BJ (cell line): ENCODE measurements at regions of chr9 and their contacts with region 1.

Region 1: DNA sequence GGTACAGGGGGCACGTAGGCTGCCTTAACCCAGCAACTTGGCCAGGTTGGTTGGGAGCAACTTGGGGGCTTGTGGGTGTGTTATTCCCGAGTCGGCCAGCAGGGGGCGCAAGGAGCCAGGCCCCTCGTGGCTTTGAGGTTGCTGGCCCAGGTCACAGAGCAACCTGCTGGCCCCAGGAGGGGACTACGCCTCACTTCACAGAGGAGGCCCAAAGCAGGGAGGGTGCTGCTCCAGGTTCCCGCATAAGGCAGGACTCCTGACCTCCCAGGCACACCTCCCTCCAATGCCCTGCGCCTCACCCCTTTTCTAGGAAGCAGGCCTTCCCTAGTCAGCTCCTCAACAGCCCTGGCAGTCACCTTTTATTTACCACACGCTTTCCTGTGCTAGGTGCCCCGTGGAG is 18.1 kb downstream of the KYAT1 start:
- DNase-seq: no peak
- H3K4me3 ChIP-seq: no peak overlapping the region
- H3K27me3 ChIP-seq: no peaks in the 10 kb centered on the region
- CTCF ChIP-seq: peak; percentile 95

Region 2: DNA sequence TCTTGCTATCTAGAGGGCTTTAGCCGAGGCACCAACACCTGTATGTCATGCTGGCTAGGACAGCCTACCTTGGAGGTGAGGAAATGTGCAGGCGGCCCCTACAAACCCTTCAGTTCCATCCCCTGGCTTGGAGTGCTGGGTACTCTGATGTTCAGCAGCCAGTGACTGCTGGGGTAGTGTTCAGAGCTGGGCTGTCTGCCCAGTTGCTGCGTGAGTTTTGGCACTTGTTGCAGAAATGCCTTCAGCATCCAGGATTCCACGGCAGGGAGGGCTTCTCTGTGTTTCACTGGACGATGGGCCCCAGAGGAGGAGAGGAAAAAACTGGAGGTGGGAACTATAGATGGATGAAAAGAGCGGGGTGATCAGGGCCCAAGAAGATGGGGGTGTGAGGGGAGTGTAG is 577.2 kb before region 1 on chr9:
- CTCF ChIA-PET with region 1: no interaction called
- POLR2A ChIA-PET with region 1: no interaction called
- DNase-seq: no peak
- H3K4me3 ChIP-seq: no peak overlapping the region
- H3K27me3 ChIP-seq: no peaks in the 10 kb centered on the region
- CTCF ChIP-seq: no peak

Region 3: GRCh38 chr9:128771745-128772519 is 91.7 kb before region 1 on chr9 and contains the start of gene ZER1:
- CTCF ChIA-PET with region 1: no interaction called
- POLR2A ChIA-PET with region 1: no interaction called
- DNase-seq: peak; percentile 20
- H3K4me3 ChIP-seq: peak within 1 kb of the TSS; percentile 69
- H3K27me3 ChIP-seq: no peaks in the 10 kb centered on the region
- CTCF ChIP-seq: no peak
- polyA plus RNA-seq, gene ZER1: 41.4 and 64.5 TPM in 2 replicates

Region 4: DNA sequence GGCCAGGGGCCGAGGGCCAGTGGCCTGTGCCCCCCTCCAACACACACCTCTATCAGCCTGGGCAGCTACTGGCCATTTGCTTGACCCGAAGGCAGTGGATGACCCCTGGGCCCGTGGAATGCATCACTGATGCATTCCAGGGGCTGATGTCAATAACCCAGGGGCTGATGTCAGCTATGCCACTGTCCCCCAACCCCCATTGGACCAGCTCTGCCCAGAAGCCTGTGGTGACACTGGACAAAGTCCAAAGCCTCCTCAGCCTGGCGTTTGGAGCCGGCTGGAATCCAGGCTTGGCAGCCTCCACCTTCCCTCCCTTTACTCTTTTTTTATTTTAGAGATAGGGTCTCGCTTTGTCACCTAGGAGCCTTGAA is 12.1 kb after region 1 on chr9:
- CTCF ChIA-PET with region 1: interaction called, 44 read pairs
- POLR2A ChIA-PET with region 1: no interaction called
- DNase-seq: no peak
- H3K4me3 ChIP-seq: no peak overlapping the region
- H3K27me3 ChIP-seq: no peaks in the 10 kb centered on the region
- CTCF ChIP-seq: no peak

Region 5: GRCh38 chr9:129052592-129052991 is 188.9 kb after region 1 on chr9:
- CTCF ChIA-PET with region 1: no interaction called
- POLR2A ChIA-PET with region 1: no interaction called
- DNase-seq: no peak
- H3K4me3 ChIP-seq: no peak overlapping the region
- H3K27me3 ChIP-seq: no peaks in the 10 kb centered on the region
- CTCF ChIP-seq: no peak